ENCODE measurements at regions of chr4 and their contacts with region 1.

Region 1: DNA sequence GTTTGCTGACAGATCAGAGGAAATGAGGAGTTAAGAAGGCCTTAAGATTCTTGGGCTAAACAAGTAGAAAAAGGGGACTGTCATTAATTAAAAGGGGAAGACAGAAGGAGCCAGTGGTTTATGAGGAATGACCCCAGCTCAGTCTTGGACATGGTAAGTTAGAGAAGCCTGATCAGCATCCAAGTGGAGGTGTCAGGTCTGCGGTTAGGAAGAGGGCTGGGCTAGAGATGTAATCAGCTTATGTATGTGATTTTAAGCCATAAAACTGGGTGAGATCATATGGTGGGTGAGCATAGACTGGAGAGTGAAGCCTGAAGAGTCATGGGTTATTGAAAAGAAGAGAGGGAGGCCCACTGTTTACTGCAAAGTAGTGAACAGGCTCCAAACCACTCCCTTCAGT is 246.1 kb downstream of the NR3C2 start:
- DNase-seq: no peak
- ATAC-seq: no peak
- H3K4me3 ChIP-seq: no peak overlapping the region
- H3K27ac ChIP-seq: no peak overlapping the region
- H3K4me1 ChIP-seq: no peaks in the 10 kb centered on the region
- H3K27me3 ChIP-seq: no peaks in the 10 kb centered on the region
- CTCF ChIP-seq: no peak
- POLR2A ChIP-seq: no peak
- RAD21 ChIP-seq: no peak

Region 2: DNA sequence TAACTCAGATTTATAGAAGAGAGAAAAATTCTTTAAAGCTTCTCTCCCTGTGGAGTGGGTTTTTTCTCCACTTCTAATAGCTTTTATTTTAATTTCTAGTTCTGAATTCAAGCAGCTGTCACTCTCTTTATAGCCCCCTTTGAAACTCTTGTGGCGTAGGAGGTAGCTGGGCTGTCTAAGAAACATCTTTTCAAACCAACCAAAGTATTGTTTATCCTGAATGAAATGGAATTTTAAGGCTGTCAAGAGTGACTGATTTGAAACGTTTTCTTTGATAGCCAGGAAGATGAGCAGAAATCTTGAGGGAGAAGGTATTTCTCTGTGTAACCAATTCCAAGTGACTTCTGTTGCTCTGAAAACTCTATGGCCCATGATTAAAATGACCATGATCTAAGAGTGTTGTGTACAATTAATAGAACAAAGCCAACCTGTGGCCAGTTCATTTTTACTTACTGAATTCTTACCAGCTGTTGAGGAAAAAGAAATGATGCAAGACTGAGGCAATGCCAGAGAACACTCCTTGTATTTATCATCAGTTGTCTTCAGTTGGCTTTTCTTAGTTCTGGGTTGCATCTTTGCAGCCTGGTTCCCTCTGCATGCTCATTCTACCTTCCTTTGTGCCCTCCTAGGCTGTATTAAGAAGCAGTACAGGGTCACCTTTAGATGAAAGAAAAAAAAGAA is 165.8 kb before region 1 on chr4:
- CTCF ChIA-PET with region 1: no interaction called
- POLR2A ChIA-PET with region 1: no interaction called
- dilution Hi-C with region 1: no loop called
- in situ Hi-C with region 1: no loop called
- intact Hi-C with region 1: no loop called
- DNase-seq: peak; percentile 75
- ATAC-seq: peak; percentile 8; the same call in 1 of the 2 replicates
- H3K4me3 ChIP-seq: no peak overlapping the region
- H3K27ac ChIP-seq: peak overlapping the region; percentile 60; the same call in 1 of the 2 replicates
- H3K4me1 ChIP-seq: 0 out of 2 replicates have a peak, but pooled peaks cover 3% of the 10 kb centered on the region
- H3K27me3 ChIP-seq: no peaks in the 10 kb centered on the region
- CTCF ChIP-seq: no peak
- POLR2A ChIP-seq: no peak
- RAD21 ChIP-seq: no peak

Region 3: GRCh38 chr4:148868212-148868611 is 672.0 kb after region 1 on chr4:
- CTCF ChIA-PET with region 1: no interaction called
- POLR2A ChIA-PET with region 1: interaction called, 17 read pairs
- dilution Hi-C with region 1: no loop called
- in situ Hi-C with region 1: no loop called
- intact Hi-C with region 1: no loop called
- DNase-seq: no peak
- ATAC-seq: no peak
- H3K4me3 ChIP-seq: no peak overlapping the region
- H3K27ac ChIP-seq: no peak overlapping the region
- H3K4me1 ChIP-seq: no peaks in the 10 kb centered on the region
- H3K27me3 ChIP-seq: no peaks in the 10 kb centered on the region
- CTCF ChIP-seq: no peak
- POLR2A ChIP-seq: no peak
- RAD21 ChIP-seq: no peak